GM18951 (cell line): ENCODE measurements at regions of chr1 and their contacts with region 1.

Region 1: DNA sequence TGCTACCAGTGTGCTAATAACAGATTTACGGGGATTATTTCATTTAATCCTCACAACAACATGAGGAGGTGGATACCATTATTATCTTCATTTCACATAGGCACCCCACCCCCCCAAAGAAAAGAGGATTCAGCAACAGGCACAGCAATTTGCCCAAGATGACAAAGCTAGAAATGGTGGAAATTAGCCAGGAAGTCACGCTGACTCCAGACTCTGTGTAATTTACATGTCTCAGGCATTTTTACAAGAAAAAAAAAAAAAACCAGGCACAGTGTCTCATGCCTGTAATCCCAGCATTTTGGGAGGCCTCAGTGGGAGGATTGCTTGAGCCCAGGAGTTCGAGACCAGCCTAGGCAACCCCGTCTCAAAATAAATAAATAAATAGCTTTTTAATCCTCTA is 37.5 kb upstream of the PRDM2 start:
- POLR2A ChIP-seq: no peak

Region 2: GRCh38 chr1:13498553-13498952 is 163.9 kb before region 1 on chr1:
- in situ Hi-C with region 1: no loop called
- POLR2A ChIP-seq: no peak

Region 3: DNA sequence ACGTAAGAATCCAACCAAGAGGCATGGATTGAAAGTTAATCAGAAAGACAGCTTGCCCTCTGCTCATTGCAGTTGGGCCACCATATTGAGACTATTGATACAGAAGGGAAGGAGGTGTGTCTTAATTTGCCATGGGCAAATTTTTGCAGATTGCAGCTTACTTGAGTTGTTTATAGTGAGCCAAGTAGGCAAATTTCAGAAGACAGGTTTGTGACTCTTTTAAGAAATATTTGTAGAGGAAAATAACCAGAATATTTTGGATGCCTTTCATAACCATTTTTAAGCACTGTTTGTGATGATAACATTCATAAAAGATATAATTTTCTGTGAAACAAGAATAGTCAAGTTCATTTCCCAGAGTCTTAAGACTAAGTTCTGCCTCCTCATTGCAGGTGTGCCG is 111.6 kb after region 1 on chr1:
- in situ Hi-C with region 1: loop called (anchors 5 kb)
- POLR2A ChIP-seq: no peak

Region 4: DNA sequence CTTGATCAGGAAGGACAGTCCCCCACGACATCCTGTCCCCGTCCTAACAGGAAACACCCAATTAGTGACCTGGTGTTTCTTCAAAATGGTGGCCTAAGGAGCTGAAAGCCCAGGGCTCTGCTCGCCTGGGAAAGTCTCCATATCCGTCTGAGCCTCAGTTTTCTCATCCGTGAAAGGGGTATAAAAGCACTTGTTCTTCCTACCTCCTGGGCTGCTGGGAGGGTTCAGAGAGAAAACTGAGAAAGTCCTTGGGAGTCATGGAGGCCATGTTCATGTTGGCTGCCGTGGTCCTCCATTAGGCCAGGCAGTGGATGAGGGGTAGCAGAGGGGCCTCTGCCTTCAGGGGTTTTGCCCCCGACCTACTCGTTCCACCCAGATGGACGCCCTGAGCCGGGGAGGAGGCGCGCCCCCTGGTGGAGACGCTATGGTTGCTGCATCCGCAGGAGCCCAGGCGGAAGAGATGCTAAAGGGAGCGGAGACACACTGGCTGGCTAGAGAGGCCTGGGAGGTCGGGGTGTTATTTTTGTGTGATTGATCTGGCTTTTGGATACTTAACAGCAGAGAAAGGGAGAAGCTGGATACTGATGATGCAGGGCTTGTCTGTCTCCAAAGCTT is 151.0 kb after region 1 on chr1:
- in situ Hi-C with region 1: loop called (anchors 5 kb)
- POLR2A ChIP-seq: no peak

Region 5: DNA sequence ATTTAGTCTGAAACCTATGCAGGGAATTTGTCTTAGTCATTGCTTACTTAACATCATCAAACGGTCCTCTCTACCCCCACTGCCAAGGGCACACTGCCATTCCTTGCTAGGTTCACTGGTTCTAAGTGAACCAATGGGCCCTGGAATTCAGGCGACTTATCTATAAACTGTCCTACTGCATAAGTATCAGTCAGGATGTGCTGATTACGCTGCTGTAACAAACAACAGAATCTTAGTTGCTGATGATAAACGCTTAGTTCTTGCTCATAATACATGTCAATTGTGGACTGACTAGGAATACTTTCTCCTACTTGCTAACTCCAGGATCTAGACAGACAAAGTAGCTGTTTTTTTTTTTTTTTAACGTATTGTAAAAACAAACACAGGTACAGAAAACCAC is 173.6 kb after region 1 on chr1:
- in situ Hi-C with region 1: no loop called
- POLR2A ChIP-seq: no peak

Region 6: GRCh38 chr1:13892671-13893325 is 230.3 kb after region 1 on chr1:
- in situ Hi-C with region 1: no loop called
- POLR2A ChIP-seq: no peak

Region 7: DNA sequence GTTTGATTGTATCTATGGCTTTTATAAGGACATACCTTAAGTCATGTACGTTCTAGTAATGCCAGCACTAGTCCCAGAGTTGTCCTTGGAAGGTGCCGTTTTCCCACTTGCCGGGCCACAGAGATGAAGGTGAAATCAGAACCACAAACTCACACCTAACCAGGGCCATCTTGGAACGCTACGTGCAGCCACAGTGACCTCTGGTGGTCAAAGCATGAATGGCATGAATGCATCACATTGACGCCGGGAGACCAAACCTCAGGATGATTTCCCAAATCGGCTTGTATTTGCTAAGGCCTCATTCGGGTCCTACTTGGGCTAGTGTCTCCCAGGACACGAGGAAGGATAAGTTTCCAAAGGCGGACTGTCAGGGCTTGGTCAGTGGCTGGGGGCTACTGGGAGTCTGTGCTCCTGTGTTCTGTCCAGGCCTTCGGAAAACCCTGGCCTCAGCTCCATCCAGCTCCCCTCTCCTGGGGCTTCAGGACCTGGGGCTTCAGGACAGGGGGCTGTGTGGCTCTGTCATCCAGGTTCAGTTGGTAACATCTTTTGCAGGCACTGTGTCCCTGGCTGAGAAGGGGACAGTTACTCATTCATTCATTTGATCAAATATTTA is 298.0 kb after region 1 on chr1:
- in situ Hi-C with region 1: loop called (anchors 25 kb)
- POLR2A ChIP-seq: no peak

Region 8: GRCh38 chr1:14215151-14215550 is 552.7 kb after region 1 on chr1:
- in situ Hi-C with region 1: no loop called
- POLR2A ChIP-seq: no peak